Dendritic cell treated with granulocyte-macrophage colony-stimulating factor and Interleukin-4, amounts not matched to agents 40 ng/mL and 50 ng/mL, for 4 days (primary cell): ENCODE measurements at regions of chr1 and their contacts with region 1.

Region 1: DNA sequence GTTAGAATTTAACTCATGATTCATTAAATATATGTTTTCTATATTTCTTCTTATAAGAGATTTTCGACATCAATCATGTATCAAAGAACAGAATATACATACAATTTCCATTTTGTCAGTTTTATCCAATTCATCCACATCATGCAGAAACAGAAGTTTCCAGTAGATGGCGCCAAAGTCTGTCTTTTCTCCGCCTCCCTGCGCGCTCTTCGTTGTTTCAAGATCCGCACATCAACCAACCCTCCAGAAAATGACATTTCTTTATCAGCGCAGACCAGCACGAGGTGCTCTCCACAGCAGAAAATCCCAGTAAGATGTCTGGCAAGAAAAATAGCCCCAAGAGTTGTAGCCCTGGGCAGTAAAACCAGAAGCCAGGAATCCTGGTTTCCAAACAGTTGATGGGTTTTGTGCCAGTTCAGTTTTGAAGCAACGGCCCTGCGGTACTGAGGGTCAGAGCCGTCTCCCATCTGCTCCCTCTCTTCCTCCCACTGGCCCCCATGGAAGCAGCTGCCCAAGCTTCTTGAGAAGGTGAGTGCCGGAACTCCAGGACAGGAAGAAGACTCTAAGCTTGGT is 38.6 kb upstream of the GPR137B start:
- H3K4me3 Mint-ChIP-seq: no peak overlapping the region
- H3K27ac Mint-ChIP-seq: no peak overlapping the region
- H3K4me1 Mint-ChIP-seq: no peaks in the 10 kb centered on the region
- H3K27me3 Mint-ChIP-seq: no peaks in the 10 kb centered on the region

Region 2: DNA sequence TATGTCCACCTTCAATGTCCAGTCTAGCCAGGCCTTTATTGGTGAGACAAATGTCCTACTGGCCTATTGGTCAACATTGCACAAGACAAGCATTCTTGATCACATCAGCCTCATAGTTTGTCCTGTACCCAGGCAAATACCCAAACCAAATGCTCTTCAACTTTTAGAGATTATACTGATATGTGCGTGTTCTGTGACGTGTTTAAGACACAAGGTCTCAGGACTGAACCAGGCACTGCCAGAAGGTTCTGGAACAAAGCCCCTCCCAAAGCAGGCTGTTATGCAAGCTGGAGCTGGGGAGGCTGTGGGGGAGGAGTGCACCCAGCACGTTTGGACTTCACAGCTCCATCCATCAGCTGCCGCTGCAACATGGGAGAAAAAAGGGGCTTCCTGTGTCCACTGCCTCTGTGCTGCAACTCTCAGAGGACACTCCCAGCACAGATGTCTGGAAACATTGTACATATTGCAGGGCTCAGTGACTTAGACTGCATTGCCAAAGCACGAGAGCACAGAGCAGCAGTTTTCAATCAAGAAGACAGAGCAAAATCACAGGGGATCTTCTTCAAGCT is 84.8 kb before region 1 on chr1:
- intact Hi-C with region 1: no loop called
- H3K4me3 Mint-ChIP-seq: no peak overlapping the region
- H3K27ac Mint-ChIP-seq: no peak overlapping the region
- H3K4me1 Mint-ChIP-seq: peaks cover 15% of the 10 kb centered on the region
- H3K27me3 Mint-ChIP-seq: no peaks in the 10 kb centered on the region

Region 3: DNA sequence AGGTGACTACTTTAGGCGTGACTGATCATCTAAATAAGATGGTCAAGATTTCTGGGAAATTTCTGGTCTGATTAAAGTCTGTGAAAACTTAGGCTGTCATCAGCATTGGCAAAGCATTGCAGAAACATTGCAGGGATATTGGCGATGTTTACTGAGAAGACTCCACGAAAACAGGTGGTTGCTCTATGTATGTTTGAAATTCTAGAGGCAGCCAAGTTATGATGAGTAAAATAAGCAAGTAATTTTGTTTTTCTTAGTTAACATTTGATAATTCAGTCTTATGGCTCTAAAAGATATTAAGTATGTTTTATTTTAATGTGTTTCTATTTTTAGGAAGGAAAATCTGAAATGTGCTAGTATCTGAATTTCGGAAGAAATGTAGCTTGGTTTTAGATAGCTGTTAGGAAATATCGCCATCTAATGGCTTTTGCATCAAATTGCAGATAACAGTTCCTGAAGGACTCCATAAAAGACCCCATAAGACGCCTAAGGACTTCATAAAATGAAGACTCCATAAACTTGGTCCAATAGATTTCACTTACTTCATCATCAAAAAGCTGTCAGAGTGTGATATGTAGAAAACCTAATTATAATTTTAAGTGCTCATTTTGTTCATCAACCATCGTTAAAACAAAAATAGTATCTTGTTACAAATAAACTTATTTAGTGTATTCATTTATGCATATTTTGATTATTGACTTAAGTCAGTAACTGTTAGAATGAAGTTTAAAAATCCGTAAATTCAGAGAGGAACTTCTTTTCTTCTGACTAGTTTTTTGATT is 1282.8 kb after region 1 on chr1:
- intact Hi-C with region 1: loop called (anchors 10 kb)
- H3K4me3 Mint-ChIP-seq: no peak overlapping the region
- H3K27ac Mint-ChIP-seq: no peak overlapping the region
- H3K4me1 Mint-ChIP-seq: no peaks in the 10 kb centered on the region
- H3K27me3 Mint-ChIP-seq: no peaks in the 10 kb centered on the region